ENCODE measurements at regions of chr18 and their contacts with region 1.

Region 1: DNA sequence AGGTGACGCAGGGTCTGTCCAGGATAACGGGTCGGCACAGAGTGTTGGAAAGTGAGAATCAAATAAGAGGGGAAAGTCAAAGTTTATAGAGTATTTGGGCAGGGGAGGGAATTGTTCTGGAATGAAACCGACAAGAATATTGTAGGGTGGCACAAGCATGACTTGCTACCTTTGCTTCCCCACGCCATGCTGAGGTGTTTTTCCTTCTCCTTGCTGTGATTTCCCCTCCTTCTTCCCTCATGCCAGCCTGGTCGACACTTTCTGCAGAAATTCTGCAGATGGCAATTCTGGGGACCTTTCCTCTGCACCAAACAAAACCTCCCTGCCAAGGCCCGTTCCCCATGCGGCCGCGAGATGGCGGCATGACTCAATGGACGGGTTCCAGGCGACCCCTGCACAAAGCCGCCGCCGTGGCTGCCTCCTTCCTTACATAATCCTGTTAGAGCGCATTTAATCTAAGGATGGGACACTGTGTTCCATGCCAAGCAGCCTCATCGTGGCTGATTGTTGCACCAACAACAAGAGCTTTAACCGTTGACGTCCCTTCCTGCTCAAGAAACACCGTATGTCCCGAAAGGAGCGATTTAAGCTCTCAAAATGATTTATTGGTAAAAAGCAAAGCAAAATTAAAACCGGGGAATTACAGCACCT is at the start of gene MRO:
- DNase-seq: peak; percentile 60 to 88 (median 79)
- ATAC-seq: peak; percentile 100
- H3K4me3 ChIP-seq: peak within 1 kb of the TSS; percentile 36 to 42
- H3K4me3 Mint-ChIP-seq: no peak within 1 kb of the TSS
- H3K27ac ChIP-seq: no peak within 1 kb of the TSS
- H3K27ac Mint-ChIP-seq: no peak within 1 kb of the TSS
- H3K4me1 ChIP-seq: peaks cover 20% of the 10 kb centered on the region
- H3K4me1 Mint-ChIP-seq: no peaks in the 10 kb centered on the region
- H3K27me3 ChIP-seq: no peaks in the 10 kb centered on the region
- H3K27me3 Mint-ChIP-seq: peaks cover 9% of the 10 kb centered on the region
- CTCF ChIP-seq: peak; percentile 93
- total RNA-seq, gene MRO: not detected

Region 2: DNA sequence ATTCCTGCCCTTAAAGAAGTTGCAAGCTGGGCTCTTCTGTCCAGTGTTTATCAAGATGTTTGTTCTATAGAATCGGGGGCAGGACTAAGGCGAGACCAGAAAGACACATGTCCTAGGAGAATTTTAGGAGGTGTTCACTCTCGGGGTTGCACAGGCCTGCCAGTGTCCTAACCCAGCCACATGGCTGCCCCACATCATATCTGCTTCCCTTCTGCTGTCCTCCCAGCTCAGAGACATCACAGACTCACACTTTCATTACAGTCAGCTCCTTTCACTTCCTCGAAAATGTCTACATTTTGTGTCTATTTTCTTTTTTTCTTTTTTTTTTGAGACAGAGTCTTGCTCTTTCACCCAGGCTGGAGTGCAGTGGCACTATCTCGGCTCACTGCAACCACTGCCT is 10.7 kb after region 1 on chr18:
- CTCF ChIA-PET with region 1: interaction called, 13 read pairs
- POLR2A ChIA-PET with region 1: no interaction called
- intact Hi-C with region 1: no loop called
- DNase-seq: no peak
- ATAC-seq: no peak
- H3K4me3 ChIP-seq: no peak overlapping the region
- H3K4me3 Mint-ChIP-seq: no peak overlapping the region
- H3K27ac ChIP-seq: no peak overlapping the region
- H3K27ac Mint-ChIP-seq: no peak overlapping the region
- H3K4me1 ChIP-seq: no peaks in the 10 kb centered on the region
- H3K4me1 Mint-ChIP-seq: no peaks in the 10 kb centered on the region
- H3K27me3 ChIP-seq: no peaks in the 10 kb centered on the region
- H3K27me3 Mint-ChIP-seq: no peaks in the 10 kb centered on the region
- CTCF ChIP-seq: no peak

Region 3: DNA sequence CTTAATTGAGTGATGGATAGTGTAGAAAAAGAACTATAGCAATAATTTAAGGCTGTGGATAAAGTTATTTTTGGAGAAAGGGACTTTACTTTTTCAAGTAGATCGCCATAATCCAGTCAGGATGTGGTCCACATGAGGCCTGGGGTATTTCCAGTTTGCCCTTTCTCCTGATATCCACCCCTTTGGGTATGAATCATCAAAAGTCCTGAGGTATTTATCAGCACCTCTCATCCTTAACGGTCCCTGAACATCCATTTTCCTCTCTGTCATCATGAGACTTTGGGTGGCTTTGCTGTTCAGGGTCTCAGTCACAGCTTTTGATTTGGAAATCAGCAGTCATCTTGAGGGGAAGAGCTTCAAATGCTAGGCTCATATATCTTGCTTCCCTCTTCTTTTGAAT is 108.7 kb after region 1 on chr18:
- CTCF ChIA-PET with region 1: interaction called, 3 read pairs
- POLR2A ChIA-PET with region 1: no interaction called
- intact Hi-C with region 1: loop called in 1 of 2 experiments (anchors 5 kb)
- DNase-seq: no peak
- ATAC-seq: no peak
- H3K4me3 ChIP-seq: no peak overlapping the region
- H3K4me3 Mint-ChIP-seq: no peak overlapping the region
- H3K27ac ChIP-seq: no peak overlapping the region
- H3K27ac Mint-ChIP-seq: no peak overlapping the region
- H3K4me1 ChIP-seq: no peaks in the 10 kb centered on the region
- H3K4me1 Mint-ChIP-seq: no peaks in the 10 kb centered on the region
- H3K27me3 ChIP-seq: no peaks in the 10 kb centered on the region
- H3K27me3 Mint-ChIP-seq: no peaks in the 10 kb centered on the region
- CTCF ChIP-seq: no peak

Region 4: DNA sequence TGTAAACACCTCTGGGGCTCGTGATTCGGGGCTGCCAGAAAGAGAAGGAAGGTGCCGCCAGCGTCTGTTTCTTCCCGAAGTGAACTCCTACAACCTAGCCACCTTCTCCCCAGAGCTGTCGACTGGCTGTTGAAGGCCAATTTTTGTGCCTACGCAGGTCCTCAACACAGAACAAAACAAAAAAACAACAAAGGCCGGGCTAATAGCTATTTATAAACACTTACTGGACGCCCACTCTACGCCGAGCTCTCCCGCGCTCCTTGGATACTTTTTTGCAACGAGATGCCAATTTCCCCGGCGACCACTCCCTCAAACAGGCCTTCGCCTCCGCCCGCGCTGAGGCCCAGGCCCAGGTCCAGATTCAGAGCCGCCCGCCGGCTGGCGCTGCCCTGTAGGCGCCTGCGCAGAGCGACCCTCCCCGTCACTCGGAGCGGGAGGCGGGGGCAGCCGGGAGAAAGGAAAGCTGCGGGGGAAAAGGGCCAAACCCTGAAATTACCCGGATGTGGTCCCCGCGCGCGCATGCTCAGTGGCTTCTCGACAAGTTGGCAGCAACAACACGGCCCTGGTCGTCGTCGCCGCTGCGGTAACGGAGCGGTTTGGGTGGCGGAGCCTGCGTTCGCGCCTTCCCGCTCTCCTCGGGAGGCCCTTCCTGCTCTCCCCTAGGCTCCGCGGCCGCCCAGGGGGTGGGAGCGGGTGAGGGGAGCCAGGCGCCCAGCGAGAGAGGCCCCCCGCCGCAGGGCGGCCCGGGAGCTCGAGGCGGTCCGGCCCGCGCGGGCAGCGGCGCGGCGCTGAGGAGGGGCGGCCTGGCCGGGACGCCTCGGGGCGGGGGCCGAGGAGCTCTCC is 210.1 kb after region 1 on chr18 and contains the start of gene SMAD4:
- CTCF ChIA-PET with region 1: interaction called, 7 read pairs
- POLR2A ChIA-PET with region 1: no interaction called
- intact Hi-C with region 1: loop called in 1 of 2 experiments (anchors 5 kb)
- DNase-seq: peak; percentile 94 to 99 (median 98)
- ATAC-seq: peak; percentile 83
- H3K4me3 ChIP-seq: peak within 1 kb of the TSS; percentile 74 to 80
- H3K4me3 Mint-ChIP-seq: peak within 1 kb of the TSS; percentile 97
- H3K27ac ChIP-seq: peak within 1 kb of the TSS; percentile 81 to 91
- H3K27ac Mint-ChIP-seq: peak within 1 kb of the TSS; percentile 99
- H3K4me1 ChIP-seq: peaks cover 41% of the 10 kb centered on the region
- H3K4me1 Mint-ChIP-seq: peaks cover 65% of the 10 kb centered on the region
- H3K27me3 ChIP-seq: no peaks in the 10 kb centered on the region
- H3K27me3 Mint-ChIP-seq: no peaks in the 10 kb centered on the region
- CTCF ChIP-seq: no peak
- total RNA-seq, gene SMAD4: 80.4 to 86.5 TPM

Region 5: GRCh38 chr18:51051105-51051712 is 231.4 kb after region 1 on chr18:
- CTCF ChIA-PET with region 1: interaction called, 31 read pairs
- POLR2A ChIA-PET with region 1: no interaction called
- intact Hi-C with region 1: loop called (anchors 1 kb)
- DNase-seq: peak in 3 of 9 experiments; percentile 25 to 76 (median 67)
- ATAC-seq: peak; percentile 92
- H3K4me3 ChIP-seq: no peak overlapping the region
- H3K4me3 Mint-ChIP-seq: no peak overlapping the region
- H3K27ac ChIP-seq: no peak overlapping the region
- H3K27ac Mint-ChIP-seq: peak overlapping the region; percentile 34
- H3K4me1 ChIP-seq: peaks cover 12% of the 10 kb centered on the region
- H3K4me1 Mint-ChIP-seq: peaks cover 43% of the 10 kb centered on the region
- H3K27me3 ChIP-seq: no peaks in the 10 kb centered on the region
- H3K27me3 Mint-ChIP-seq: no peaks in the 10 kb centered on the region
- CTCF ChIP-seq: peak; percentile 80